Posterior cingulate gyrus (tissue), 11 donors: ENCODE measurements at regions of chr3 and their contacts with region 1.

Region 1: DNA sequence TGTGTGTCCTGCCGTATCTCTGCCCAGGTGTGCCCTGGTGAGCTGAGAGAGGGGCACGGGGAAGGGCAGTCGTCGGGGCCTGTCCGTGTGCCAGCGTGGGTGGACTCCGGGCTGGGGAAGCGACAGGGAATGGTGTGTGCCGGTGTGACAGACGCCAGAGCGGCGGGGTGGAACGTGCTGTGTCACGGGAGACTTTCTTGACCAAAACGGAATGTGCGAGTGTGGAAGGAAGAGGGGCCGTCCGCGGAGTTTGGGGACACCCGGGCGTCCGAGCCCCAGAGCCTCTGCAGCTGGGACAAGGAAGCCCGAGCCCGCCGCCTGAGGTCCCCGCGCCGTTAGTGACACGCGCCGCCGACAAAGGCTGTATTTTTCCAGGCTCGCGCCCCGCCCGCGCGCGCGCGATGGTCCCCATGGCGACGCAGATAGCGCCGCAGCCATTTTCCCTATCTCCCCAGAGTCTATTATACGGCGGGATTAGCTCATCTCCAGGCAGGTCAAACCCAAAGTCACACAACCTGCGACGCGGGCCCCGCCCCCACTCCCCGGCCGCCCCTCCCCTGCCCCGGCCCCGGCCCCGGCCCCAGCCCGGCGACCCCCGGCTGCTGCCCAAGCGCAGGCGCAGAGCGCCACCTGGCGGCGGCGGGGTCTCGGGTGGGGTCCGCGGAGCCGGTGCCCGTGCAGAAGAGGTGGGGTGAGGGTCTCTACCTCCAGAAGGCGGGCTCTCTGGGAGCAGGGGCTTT is 4.6 kb upstream of the GATA2 start:
- DNase-seq: peak; percentile 43 to 96 (median 76)

Region 2: DNA sequence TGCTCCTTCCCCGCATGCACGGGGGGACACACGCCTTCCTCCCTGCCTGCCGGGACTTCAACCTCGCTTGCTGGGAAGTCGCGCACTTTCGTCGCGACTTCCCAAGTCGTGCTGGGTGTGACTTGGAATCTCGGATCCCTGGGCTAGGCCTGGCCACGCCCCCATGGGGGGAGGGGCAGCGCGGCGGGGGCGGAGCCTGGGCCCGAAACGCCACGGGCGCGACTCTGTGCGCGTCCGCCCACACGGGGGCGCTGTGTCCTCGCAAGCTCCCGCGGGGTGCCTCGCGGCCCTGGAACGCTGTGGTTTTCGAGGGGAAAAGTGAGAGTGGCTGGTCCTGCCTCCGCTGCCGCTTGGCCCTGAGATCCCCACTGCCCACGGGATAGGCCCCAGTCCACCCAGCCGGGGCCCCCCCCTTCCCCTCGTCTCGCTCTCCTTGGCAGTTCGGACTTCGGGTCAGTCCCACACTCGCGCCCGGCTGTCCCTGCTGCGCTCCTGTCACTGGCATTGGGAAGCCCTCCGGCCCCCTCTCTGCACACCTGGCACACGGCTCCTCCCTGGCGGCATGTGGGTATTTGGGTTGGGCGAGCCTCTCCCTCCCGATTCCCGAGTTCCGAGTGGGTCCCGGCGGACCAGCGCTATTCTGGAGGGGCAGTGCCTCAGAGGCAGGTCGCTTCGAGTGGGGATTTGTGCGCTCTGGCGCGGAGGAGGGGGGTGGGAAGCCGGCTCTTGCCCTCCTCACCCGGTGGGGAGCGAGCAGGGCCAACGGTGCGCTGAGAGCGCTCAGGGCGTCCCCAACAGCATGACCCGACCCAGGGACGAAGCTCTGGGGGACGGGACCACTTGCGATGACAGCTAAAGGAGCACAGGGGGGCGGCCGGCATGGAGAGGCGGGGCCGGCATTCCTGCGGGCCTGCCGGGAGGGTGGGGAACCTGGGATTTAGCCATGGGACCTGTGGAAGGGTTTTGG is 421.8 kb before region 1 on chr3:
- intact Hi-C with region 1: loop called (anchors 5 kb)
- DNase-seq: peak; percentile 79 to 99 (median 92)

Region 3: GRCh38 chr3:128170805-128171516 is 326.6 kb before region 1 on chr3:
- intact Hi-C with region 1: loop called (anchors 5 kb)
- DNase-seq: peak in 7 of 10 donors; percentile 36 to 92 (median 60)

Region 4: GRCh38 chr3:128226795-128227395 is 270.7 kb before region 1 on chr3:
- intact Hi-C with region 1: loop called (anchors 10 kb)
- DNase-seq: peak in 8 of 10 donors; percentile 11 to 88 (median 46)

Region 5: DNA sequence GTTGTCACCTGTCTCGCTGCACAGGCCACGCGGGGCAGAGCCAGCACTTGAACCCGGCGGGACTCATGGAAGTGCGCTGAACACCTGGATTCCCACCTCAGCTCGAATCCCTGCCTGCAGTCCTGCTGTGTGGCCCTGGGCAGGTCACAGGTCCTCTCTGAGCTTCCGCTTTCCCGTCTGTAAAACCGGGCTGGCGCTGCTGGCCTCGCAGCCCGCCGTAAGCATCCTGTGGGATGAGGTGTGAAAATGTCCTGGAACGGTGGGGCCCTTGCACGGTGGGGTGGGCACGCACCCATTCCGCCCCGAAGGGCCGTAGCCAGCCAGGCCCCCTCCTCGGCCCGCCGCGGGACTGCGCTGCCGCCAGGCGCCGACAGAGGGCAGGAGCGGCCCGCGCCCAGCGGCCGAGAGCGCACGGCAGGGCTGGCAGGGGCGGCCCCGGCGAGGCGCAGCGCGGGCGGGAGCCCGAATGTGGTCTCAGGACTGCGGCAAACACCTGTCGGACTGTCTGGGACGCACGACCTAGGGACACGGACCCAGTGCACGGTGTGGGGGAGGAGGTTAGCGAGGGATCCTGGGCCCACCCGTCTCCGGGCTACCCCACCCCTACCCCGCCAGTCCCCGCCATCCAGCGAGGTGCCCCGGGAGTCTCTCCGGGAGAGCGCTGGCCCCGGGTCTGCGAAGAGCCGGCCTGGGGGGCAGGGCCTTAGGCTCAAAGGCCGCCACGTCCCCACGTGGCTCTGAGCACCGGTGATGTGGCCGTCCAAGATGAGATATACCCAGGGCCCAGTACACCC is 71.2 kb before region 1 on chr3:
- intact Hi-C with region 1: loop called (anchors 2 kb)
- DNase-seq: peak in 4 of 10 donors; percentile 15 to 58 (median 28)

Region 6: GRCh38 chr3:128438488-128439072 is 59.0 kb before region 1 on chr3:
- intact Hi-C with region 1: no loop called
- DNase-seq: peak in 1 of 10 donors; percentile 67

Region 7: GRCh38 chr3:128584412-128585020 is 87.0 kb after region 1 on chr3:
- intact Hi-C with region 1: loop called (anchors 10 kb)
- DNase-seq: peak; percentile 20 to 96 (median 77)

Region 8: DNA sequence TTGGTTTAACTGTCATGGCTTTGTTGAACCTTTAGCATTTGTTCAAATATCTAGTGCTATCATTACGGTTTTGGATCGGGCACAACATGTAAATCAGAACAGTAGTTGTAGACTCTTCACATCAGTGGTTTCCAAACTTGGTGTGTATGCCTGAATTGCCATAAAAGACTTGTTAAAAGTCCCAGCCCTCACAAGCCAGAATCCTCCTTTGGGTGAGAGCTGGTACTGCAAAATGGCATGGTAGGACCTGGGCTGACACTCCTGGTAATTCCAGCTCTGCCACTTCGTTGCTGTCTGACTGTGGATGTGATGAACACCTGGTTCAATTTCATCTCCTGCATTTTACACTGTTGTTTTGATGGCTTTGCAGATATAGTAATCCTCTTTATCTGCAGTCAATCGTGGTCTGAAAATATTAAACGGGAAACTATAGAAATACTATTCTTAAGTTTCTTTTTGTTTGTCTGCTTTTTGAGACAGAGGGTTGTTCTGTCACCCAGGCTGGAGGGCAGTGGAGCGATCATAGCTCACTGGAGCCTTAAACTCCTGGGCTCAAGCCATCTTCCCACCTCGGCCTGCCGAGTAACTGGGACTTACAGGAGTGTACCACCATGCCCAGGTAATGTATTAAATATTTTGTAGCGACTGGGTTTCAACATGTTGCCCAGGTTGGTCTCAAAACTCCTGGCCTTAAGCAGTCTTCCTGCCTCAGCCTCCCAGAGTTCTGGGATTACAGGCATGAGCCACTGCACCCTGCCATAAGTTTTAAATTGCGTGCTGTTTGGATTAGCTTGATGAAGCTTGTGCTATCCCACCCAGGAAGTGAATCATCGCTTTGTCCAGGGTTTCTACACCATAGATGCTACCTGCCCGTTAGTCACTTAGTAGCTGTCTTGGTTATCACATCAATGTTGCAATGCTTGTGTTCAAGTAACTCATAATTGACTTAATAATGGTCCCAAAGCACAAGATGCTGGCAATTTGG is 290.0 kb after region 1 on chr3:
- intact Hi-C with region 1: no loop called
- DNase-seq: no peak